CD4-positive, alpha-beta T cell (primary cell): ENCODE measurements at regions of chr7 and their contacts with region 1.

Region 1: DNA sequence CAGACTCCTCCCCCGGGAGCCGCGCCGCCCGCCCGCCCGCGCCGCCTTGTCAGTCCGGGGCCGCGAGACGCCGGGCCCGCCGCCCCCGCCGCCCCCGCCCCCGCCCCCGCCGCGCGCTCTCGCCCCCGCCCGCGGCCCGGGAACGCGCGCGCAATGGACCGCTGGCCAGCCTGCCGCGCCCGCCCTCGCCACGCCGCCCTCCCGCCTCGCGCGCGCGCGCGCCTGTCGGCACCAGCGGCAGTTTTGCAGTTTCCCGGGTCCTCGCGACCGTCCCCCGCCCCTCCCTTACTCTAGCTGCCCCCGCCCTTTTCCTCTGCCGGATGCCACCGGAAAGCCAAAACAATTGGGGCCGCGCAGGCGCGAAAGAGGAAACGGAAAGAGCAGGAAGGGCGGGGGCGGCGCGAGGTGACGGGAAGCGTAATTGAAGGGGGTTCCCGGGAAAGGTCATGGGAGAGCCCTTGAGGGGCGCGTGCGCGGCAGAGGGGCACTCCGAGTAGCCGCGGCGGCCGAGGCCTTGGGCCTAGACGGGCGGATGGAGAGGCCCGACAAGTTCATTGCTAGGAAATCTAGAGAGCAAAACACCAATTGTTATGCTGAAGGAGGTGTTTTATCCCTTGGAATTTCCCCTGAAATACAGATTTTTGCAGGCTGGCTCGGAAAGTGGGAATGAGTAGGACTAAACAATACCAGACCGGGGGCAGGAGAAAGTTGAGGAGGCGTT is 400 bp upstream of the KBTBD2 start:
- DNase-seq: peak; percentile 92 to 99 (median 96)
- ATAC-seq: peak; percentile 59
- H3K4me3 ChIP-seq: peak overlapping the region; percentile 81
- H3K4me3 Mint-ChIP-seq: peak overlapping the region; percentile 91
- H3K27ac ChIP-seq: peak overlapping the region; percentile 98 to 99
- H3K27ac Mint-ChIP-seq: peak overlapping the region; percentile 97
- H3K4me1 ChIP-seq: peaks cover 29% of the 10 kb centered on the region
- H3K4me1 Mint-ChIP-seq: peaks cover 55% of the 10 kb centered on the region
- H3K27me3 ChIP-seq: no peaks in the 10 kb centered on the region
- H3K27me3 Mint-ChIP-seq: no peaks in the 10 kb centered on the region
- CTCF ChIP-seq: no peak

Region 2: GRCh38 chr7:31336202-31337001 is 1555.6 kb before region 1 on chr7:
- CTCF ChIA-PET with region 1: no interaction called
- POLR2A ChIA-PET with region 1: no interaction called
- intact Hi-C with region 1: no loop called
- DNase-seq: no peak
- ATAC-seq: no peak
- H3K4me3 ChIP-seq: no peak overlapping the region
- H3K4me3 Mint-ChIP-seq: no peak overlapping the region
- H3K27ac ChIP-seq: no peak overlapping the region
- H3K27ac Mint-ChIP-seq: no peak overlapping the region
- H3K4me1 ChIP-seq: no peaks in the 10 kb centered on the region
- H3K4me1 Mint-ChIP-seq: no peaks in the 10 kb centered on the region
- H3K27me3 ChIP-seq: peaks cover 7 to 16% of the 10 kb centered on the region in 2 experiments
- H3K27me3 Mint-ChIP-seq: peaks cover 29% of the 10 kb centered on the region
- CTCF ChIP-seq: no peak

Region 3: DNA sequence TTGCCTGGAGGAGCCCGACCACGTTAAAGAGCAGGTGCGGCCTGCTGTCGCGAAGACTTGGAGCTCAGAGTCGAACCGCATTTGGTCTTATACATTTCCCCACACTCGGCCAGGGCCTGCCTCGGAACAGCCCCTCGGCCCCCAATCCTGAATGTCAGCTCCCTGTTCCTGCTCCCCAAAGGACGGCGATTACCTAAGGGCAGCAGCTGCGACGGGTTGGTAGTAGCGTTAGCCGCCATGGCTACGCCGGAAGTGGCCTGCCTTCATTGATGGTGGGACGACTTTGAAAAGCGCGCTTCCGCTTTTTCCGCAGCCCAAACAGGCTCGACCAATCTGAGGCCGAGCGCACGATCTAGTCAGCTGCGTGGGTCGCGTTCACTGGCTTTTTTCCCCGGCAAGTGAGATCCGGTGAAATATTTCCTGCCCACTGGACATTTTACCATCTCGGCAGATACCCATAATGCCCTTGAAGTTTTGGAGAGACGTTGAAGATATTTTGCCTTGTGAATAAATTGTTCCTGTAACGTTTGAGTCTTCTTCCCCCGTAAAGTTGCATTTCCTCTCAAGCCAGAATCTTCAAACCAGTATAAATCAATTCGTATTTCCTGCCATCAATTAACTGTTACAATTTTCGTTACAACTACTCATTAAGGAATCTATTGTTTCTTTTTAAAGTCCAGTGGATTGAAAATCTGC is 401.7 kb before region 1 on chr7 and contains the start of gene LSM5:
- CTCF ChIA-PET with region 1: no interaction called
- POLR2A ChIA-PET with region 1: interaction called, 24 read pairs
- intact Hi-C with region 1: loop called (anchors 5 kb)
- DNase-seq: peak; percentile 80 to 96 (median 85)
- ATAC-seq: peak; percentile 67
- H3K4me3 ChIP-seq: peak within 1 kb of the TSS; percentile 68
- H3K4me3 Mint-ChIP-seq: peak within 1 kb of the TSS; percentile 92
- H3K27ac ChIP-seq: peak within 1 kb of the TSS; percentile 83 to 84
- H3K27ac Mint-ChIP-seq: peak within 1 kb of the TSS; percentile 92
- H3K4me1 ChIP-seq: peaks cover 16% of the 10 kb centered on the region
- H3K4me1 Mint-ChIP-seq: peaks cover 42% of the 10 kb centered on the region
- H3K27me3 ChIP-seq: no peaks in the 10 kb centered on the region
- H3K27me3 Mint-ChIP-seq: no peaks in the 10 kb centered on the region
- CTCF ChIP-seq: no peak
- total RNA-seq, gene LSM5: 28.2 to 28.7 TPM

Region 4: GRCh38 chr7:32846701-32847100 is 45.3 kb before region 1 on chr7:
- CTCF ChIA-PET with region 1: interaction called, 8 read pairs
- POLR2A ChIA-PET with region 1: interaction called, 32 read pairs
- intact Hi-C with region 1: loop called (anchors 1 to 5 kb)
- DNase-seq: peak; percentile 84 to 97 (median 91)
- ATAC-seq: peak; percentile 100
- H3K4me3 ChIP-seq: no peak overlapping the region
- H3K4me3 Mint-ChIP-seq: no peak overlapping the region
- H3K27ac ChIP-seq: no peak overlapping the region
- H3K27ac Mint-ChIP-seq: no peak overlapping the region
- H3K4me1 ChIP-seq: peaks cover 5% of the 10 kb centered on the region
- H3K4me1 Mint-ChIP-seq: peaks cover 6% of the 10 kb centered on the region
- H3K27me3 ChIP-seq: peaks cover 3 to 4% of the 10 kb centered on the region in 2 experiments
- H3K27me3 Mint-ChIP-seq: peaks cover 28% of the 10 kb centered on the region
- CTCF ChIP-seq: peak; percentile 90

Region 5: GRCh38 chr7:32905175-32905662 is 13.3 kb after region 1 on chr7:
- CTCF ChIA-PET with region 1: interaction called, 5 read pairs
- POLR2A ChIA-PET with region 1: interaction called, 113 read pairs
- intact Hi-C with region 1: loop called in 1 of 2 experiments (anchors 1 kb)
- DNase-seq: peak; percentile 26 to 94 (median 60)
- ATAC-seq: peak; percentile 84
- H3K4me3 ChIP-seq: peak overlapping the region; percentile 39
- H3K4me3 Mint-ChIP-seq: peak overlapping the region; percentile 78
- H3K27ac ChIP-seq: peak overlapping the region; percentile 13 to 82
- H3K27ac Mint-ChIP-seq: peak overlapping the region; percentile 81
- H3K4me1 ChIP-seq: peaks cover 25% of the 10 kb centered on the region
- H3K4me1 Mint-ChIP-seq: peaks cover 12% of the 10 kb centered on the region
- H3K27me3 ChIP-seq: no peaks in the 10 kb centered on the region
- H3K27me3 Mint-ChIP-seq: no peaks in the 10 kb centered on the region
- CTCF ChIP-seq: no peak

Region 6: GRCh38 chr7:33040803-33041516 is 149.0 kb after region 1 on chr7:
- CTCF ChIA-PET with region 1: interaction called, 3 read pairs
- POLR2A ChIA-PET with region 1: interaction called, 31 read pairs
- intact Hi-C with region 1: loop called in 1 of 2 experiments (anchors 5 kb)
- DNase-seq: peak; percentile 44 to 90 (median 58)
- ATAC-seq: peak; percentile 99
- H3K4me3 ChIP-seq: peak overlapping the region; percentile 45
- H3K4me3 Mint-ChIP-seq: peak overlapping the region; percentile 89
- H3K27ac ChIP-seq: peak overlapping the region; percentile 56 to 75
- H3K27ac Mint-ChIP-seq: peak overlapping the region; percentile 98
- H3K4me1 ChIP-seq: peaks cover 5% of the 10 kb centered on the region
- H3K4me1 Mint-ChIP-seq: peaks cover 70% of the 10 kb centered on the region
- H3K27me3 ChIP-seq: no peaks in the 10 kb centered on the region
- H3K27me3 Mint-ChIP-seq: no peaks in the 10 kb centered on the region
- CTCF ChIP-seq: no peak

Region 7: DNA sequence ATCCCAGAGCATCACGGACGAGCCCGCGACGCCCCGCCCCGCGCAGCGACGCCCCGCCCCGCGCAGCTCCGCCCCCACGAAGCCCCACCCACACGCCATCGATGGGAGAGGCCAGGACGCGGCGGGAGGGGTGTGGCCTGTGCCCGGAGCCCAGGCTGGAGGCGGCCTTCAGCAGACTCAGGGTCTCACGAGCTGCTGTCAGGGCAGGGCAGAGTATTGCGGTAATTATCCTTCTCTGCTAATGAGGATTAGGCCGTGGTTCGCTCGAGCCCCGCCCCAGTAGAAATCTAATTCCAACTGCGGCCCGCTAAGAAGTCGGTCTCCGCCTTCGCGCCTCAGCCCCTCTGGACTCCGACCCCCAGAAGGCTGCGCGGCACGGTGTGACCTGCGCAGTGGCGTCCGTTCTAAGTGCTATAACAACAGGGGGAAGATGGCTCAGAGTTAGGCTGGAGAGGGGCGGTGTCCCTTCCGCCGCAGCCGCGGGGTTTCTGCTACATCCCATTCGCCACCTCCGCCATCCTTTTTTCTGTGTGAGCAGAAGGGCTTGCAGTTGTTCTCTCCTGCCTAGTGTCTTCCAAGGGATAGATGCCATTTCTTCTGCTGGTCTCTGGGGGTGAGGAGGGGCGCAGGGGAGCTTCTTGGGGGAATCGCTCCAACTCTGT is 171.0 kb after region 1 on chr7:
- CTCF ChIA-PET with region 1: no interaction called
- POLR2A ChIA-PET with region 1: interaction called, 59 read pairs
- intact Hi-C with region 1: loop called (anchors 2 to 5 kb)
- DNase-seq: peak; percentile 83 to 98 (median 90)
- ATAC-seq: peak; percentile 90
- H3K4me3 ChIP-seq: peak overlapping the region; percentile 72
- H3K4me3 Mint-ChIP-seq: peak overlapping the region; percentile 98
- H3K27ac ChIP-seq: peak overlapping the region; percentile 75 to 89
- H3K27ac Mint-ChIP-seq: peak overlapping the region; percentile 95
- H3K4me1 ChIP-seq: peaks cover 25% of the 10 kb centered on the region
- H3K4me1 Mint-ChIP-seq: peaks cover 48% of the 10 kb centered on the region
- H3K27me3 ChIP-seq: no peaks in the 10 kb centered on the region
- H3K27me3 Mint-ChIP-seq: no peaks in the 10 kb centered on the region
- CTCF ChIP-seq: no peak

Region 8: DNA sequence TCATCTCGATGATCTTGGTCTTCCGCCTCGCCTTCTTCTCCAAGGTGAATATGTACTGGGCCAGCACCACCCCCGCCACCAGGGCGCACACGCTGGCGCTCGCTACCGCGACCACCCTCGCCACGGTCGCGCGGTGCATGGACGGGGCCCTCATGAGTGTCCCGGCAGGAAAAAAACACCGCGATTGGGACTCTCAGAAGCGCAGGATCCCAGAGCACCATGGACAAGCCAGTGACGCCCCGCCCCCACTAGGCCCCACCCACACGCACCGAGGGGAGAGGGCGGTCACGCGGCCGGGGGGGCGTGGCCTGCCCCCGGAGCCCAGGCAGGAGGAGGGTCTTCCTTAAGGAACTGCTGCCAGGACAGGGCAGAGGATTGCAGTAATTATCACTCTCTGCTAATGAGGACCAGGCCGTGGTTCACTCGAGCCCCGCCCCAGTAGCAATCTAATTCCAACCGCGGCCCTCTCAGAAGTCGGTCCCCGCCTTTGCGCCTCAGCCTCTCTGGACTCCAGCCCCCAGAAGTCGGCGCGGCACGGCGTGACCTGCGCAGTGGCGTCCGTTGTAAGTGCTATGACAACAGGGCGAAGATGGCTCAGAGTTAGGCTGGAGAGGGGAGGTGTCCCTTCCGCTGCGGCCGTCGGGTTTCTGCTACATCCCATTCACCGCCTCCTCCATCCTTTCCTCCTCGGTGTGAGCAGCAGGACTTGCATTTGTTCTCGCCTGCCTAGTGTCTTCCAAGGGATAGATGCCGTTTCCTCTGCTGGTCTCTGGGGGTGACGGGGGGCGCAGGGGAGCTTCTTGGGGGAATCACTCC is 237.2 kb after region 1 on chr7 and contains the start of gene BBS9:
- CTCF ChIA-PET with region 1: no interaction called
- POLR2A ChIA-PET with region 1: no interaction called
- intact Hi-C with region 1: loop called (anchors 2 to 5 kb)
- DNase-seq: peak; percentile 79 to 95 (median 87)
- ATAC-seq: peak; percentile 95
- H3K4me3 ChIP-seq: peak within 1 kb of the TSS; percentile 63
- H3K4me3 Mint-ChIP-seq: peak within 1 kb of the TSS; percentile 96
- H3K27ac ChIP-seq: peak within 1 kb of the TSS; percentile 54 to 79
- H3K27ac Mint-ChIP-seq: peak within 1 kb of the TSS; percentile 92
- H3K4me1 ChIP-seq: peaks cover 4% of the 10 kb centered on the region
- H3K4me1 Mint-ChIP-seq: peaks cover 34% of the 10 kb centered on the region
- H3K27me3 ChIP-seq: no peaks in the 10 kb centered on the region
- H3K27me3 Mint-ChIP-seq: peaks cover 4% of the 10 kb centered on the region
- CTCF ChIP-seq: no peak
- total RNA-seq, gene BBS9: 16.0 to 20.4 TPM